Caco-2 (cell line): ENCODE measurements at regions of chr17 and their contacts with region 1.

Region 1: GRCh38 chr17:43517615-43518386 is 28.3 kb downstream of the ETV4 start:
- DNase-seq: no peak
- H3K4me3 ChIP-seq: no peak overlapping the region
- H3K4me3 Mint-ChIP-seq: no peak overlapping the region
- H3K27ac Mint-ChIP-seq: no peak overlapping the region
- H3K4me1 ChIP-seq: no peaks in the 10 kb centered on the region
- H3K4me1 Mint-ChIP-seq: no peaks in the 10 kb centered on the region
- H3K27me3 ChIP-seq: no peaks in the 10 kb centered on the region
- H3K27me3 Mint-ChIP-seq: no peaks in the 10 kb centered on the region
- CTCF ChIP-seq: no peak

Region 2: GRCh38 chr17:43546319-43547188 is 28.8 kb after region 1 on chr17 and contains the start of gene ETV4:
- CTCF ChIA-PET with region 1: no interaction called
- POLR2A ChIA-PET with region 1: no interaction called
- intact Hi-C with region 1: loop called (anchors 1 kb)
- DNase-seq: peak; percentile 96 to 97
- H3K4me3 ChIP-seq: peak within 1 kb of the TSS; percentile 75
- H3K4me3 Mint-ChIP-seq: peak within 1 kb of the TSS; percentile 85
- H3K27ac Mint-ChIP-seq: peak within 1 kb of the TSS; percentile 93
- H3K4me1 ChIP-seq: peaks cover 19% of the 10 kb centered on the region
- H3K4me1 Mint-ChIP-seq: peaks cover 17% of the 10 kb centered on the region
- H3K27me3 ChIP-seq: no peaks in the 10 kb centered on the region
- H3K27me3 Mint-ChIP-seq: no peaks in the 10 kb centered on the region
- CTCF ChIP-seq: no peak
- total RNA-seq, gene ETV4: 37.8 and 48.5 TPM in 2 replicates

Region 3: DNA sequence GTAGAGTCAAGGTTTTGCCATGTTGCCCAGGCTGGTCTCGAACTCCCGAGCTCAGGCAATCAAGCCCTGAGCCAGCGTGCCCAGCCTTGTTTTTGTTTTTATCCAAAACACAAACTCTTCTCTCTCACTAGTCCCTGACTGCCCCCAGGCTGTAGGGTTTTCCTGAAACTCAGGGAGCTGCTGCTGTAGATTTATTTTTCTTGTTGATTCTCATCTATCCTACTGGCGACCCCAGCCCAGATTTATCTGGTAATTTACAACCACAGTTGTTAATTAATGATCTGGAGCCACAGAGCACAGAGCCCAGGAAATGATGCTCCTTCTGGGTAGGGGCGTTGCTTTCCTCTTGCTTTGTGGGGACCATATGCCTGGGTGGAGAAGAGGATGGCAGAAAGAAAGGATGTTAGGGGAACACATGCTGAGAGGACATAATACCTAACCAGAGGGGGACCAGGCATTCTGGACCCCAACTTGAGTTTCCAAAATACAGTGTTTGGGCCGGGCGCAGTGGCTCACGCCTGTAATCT is 35.7 kb after region 1 on chr17:
- CTCF ChIA-PET with region 1: no interaction called
- POLR2A ChIA-PET with region 1: no interaction called
- intact Hi-C with region 1: loop called (anchors 2 kb)
- DNase-seq: no peak
- H3K4me3 ChIP-seq: no peak overlapping the region
- H3K4me3 Mint-ChIP-seq: no peak overlapping the region
- H3K27ac Mint-ChIP-seq: no peak overlapping the region
- H3K4me1 ChIP-seq: peaks cover 41% of the 10 kb centered on the region
- H3K4me1 Mint-ChIP-seq: peaks cover 18% of the 10 kb centered on the region
- H3K27me3 ChIP-seq: no peaks in the 10 kb centered on the region
- H3K27me3 Mint-ChIP-seq: no peaks in the 10 kb centered on the region
- CTCF ChIP-seq: no peak

Region 4: GRCh38 chr17:43584666-43585102 is 66.9 kb after region 1 on chr17:
- CTCF ChIA-PET with region 1: interaction called, 13 read pairs
- POLR2A ChIA-PET with region 1: interaction called, 8 read pairs
- intact Hi-C with region 1: no loop called
- DNase-seq: peak; percentile 81 to 88
- H3K4me3 ChIP-seq: no peak overlapping the region
- H3K4me3 Mint-ChIP-seq: peak overlapping the region; percentile 14
- H3K27ac Mint-ChIP-seq: peak overlapping the region; percentile 92
- H3K4me1 ChIP-seq: peaks cover 73% of the 10 kb centered on the region
- H3K4me1 Mint-ChIP-seq: peaks cover 57% of the 10 kb centered on the region
- H3K27me3 ChIP-seq: no peaks in the 10 kb centered on the region
- H3K27me3 Mint-ChIP-seq: no peaks in the 10 kb centered on the region
- CTCF ChIP-seq: no peak

Region 5: DNA sequence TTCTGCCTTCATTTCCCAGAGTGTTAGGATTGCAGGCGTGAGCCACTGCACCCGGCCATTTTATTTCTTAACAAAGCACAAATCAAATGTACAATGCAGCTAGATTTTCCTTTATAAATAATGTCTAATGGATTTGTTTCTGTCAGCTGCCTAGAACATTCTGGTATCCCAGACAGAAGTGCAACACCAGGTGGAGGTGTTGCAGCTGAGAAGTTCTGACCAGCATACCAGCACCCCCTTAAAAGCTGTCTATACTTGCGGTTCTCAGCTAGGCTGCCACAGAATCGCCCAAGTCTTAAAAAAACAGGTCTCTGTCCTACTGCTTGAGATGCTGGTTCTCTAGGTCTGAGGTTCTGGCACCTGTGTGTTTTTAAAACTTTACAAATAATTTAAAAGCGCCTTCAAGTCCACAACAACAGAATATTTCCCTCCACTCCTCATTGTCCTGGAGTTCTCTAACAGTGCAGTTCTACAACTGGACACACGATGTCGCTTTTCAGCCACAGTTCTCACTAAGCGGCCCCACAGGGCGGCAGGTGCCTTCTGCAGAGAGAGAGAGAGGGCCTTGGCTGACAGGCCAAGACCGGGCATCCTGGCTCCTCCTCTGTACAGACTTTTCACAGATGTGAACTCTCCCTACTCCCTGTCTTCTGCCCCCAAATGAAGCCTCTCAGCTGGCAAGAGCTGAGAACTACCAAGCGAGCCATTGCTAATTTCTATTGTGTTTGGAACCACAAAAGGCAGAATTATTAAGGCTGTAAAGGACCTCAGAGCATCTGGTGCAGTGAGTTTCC is 176.5 kb after region 1 on chr17:
- CTCF ChIA-PET with region 1: no interaction called
- POLR2A ChIA-PET with region 1: no interaction called
- intact Hi-C with region 1: loop called (anchors 1 kb)
- DNase-seq: peak; percentile 85 to 88
- H3K4me3 ChIP-seq: no peak overlapping the region
- H3K4me3 Mint-ChIP-seq: peak overlapping the region; percentile 57
- H3K27ac Mint-ChIP-seq: no peak overlapping the region
- H3K4me1 ChIP-seq: no peaks in the 10 kb centered on the region
- H3K4me1 Mint-ChIP-seq: peaks cover 6% of the 10 kb centered on the region
- H3K27me3 ChIP-seq: no peaks in the 10 kb centered on the region
- H3K27me3 Mint-ChIP-seq: no peaks in the 10 kb centered on the region
- CTCF ChIP-seq: peak; percentile 87 to 96

Region 6: DNA sequence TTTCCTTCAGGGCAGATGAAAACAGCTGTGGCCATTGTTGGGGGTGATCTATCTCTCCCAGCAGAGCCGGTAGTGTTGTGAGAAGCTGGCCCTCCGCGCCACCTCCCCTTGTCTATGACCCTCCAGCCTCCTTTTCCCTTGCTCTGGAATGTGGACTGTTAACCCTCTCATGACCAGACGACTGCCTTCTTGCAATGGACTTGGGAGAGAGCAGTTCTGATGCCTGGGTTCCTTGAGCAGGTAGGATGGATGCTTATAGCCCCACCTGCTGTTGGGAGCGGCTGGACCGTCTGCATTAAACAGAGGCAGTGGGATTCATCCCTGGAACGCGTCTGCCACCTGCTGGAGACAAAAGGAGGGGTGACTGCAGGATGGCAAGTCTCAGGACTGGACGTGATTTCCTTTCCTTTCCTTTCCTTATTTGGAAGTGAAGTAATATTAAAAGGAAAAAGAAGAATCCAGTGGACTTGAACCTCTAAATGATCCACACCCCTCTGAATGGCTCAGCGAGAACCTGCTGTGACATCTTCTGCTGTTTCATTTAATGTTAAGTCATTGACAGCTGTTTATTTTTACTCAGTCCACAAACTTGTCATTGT is 242.6 kb after region 1 on chr17:
- CTCF ChIA-PET with region 1: no interaction called
- POLR2A ChIA-PET with region 1: no interaction called
- intact Hi-C with region 1: loop called (anchors 1 kb)
- DNase-seq: peak; percentile 96
- H3K4me3 ChIP-seq: no peak overlapping the region
- H3K4me3 Mint-ChIP-seq: peak overlapping the region; percentile 46
- H3K27ac Mint-ChIP-seq: peak overlapping the region; percentile 44
- H3K4me1 ChIP-seq: no peaks in the 10 kb centered on the region
- H3K4me1 Mint-ChIP-seq: peaks cover 9% of the 10 kb centered on the region
- H3K27me3 ChIP-seq: no peaks in the 10 kb centered on the region
- H3K27me3 Mint-ChIP-seq: no peaks in the 10 kb centered on the region
- CTCF ChIP-seq: peak; percentile 99